ENCODE measurements at regions of chr9 and their contacts with region 1.

Region 1: DNA sequence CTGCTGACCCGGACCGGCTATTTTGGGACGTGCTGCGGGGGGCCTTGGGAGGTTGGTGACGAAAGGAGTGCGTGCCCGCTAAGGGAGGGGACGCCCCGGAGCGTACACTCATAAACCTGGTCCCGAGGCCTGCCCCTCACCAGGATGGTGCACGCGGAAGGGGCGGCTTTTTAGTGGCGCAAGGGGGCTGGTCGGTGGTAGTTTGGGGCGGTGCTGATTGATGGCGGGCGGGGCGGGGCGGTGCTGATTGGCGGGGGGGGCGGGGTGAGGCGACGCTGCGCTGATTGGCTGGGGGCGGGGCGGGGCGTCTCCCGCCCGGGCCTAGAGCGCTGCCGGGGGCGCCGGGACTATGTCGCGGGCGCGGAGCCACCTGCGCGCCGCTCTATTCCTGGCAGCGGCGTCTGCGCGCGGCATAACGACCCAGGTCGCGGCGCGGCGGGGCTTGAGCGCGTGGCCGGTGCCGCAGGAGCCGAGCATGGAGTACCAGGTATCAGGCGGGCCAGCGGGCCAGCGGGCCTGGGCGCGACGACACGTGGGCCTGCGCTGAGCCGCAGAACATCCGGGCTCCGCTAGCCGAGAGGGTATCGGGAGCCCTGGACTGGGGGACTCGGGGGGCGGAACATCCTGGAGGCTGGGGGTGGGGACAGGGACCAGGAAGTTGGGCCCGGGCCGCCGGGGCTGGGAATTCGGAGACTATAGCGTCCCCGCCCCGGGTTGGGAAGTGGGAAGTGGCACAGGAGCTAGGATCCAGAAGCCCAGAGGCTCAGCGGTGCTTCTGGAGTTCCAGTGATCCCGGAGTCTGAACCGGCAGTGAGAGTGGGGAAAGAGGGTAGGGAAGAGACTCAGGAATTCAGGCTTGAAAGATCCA is at the start of gene FPGS:
- DNase-seq: peak; percentile 66 to 90
- H3K4me3 ChIP-seq: peak within 1 kb of the TSS; percentile 86
- H3K27ac ChIP-seq: peak within 1 kb of the TSS; percentile 96
- H3K4me1 ChIP-seq: peaks cover 48% of the 10 kb centered on the region
- H3K27me3 ChIP-seq: no peaks in the 10 kb centered on the region
- CTCF ChIP-seq: no peak
- total RNA-seq, gene FPGS: 152 and 191 TPM in 2 replicates

Region 2: GRCh38 chr9:126791406-126792151 is 1011.2 kb before region 1 on chr9:
- CTCF ChIA-PET with region 1: no interaction called
- POLR2A ChIA-PET with region 1: no interaction called
- intact Hi-C with region 1: no loop called
- DNase-seq: peak; percentile 69 to 99
- H3K4me3 ChIP-seq: no peak overlapping the region
- H3K27ac ChIP-seq: peak overlapping the region; percentile 77
- H3K4me1 ChIP-seq: peaks cover 49% of the 10 kb centered on the region
- H3K27me3 ChIP-seq: no peaks in the 10 kb centered on the region
- CTCF ChIP-seq: no peak

Region 3: GRCh38 chr9:126914458-126915280 is 888.1 kb before region 1 on chr9 and contains the start of gene RALGPS1:
- CTCF ChIA-PET with region 1: no interaction called
- POLR2A ChIA-PET with region 1: interaction called, 11 read pairs
- intact Hi-C with region 1: no loop called
- DNase-seq: peak; percentile 90 to 98
- H3K4me3 ChIP-seq: peak within 1 kb of the TSS; percentile 61
- H3K27ac ChIP-seq: no peak within 1 kb of the TSS
- H3K4me1 ChIP-seq: peaks cover 6% of the 10 kb centered on the region; the same call in 1 of the 2 replicates
- H3K27me3 ChIP-seq: no peaks in the 10 kb centered on the region
- CTCF ChIP-seq: no peak
- total RNA-seq, gene RALGPS1: 23.3 and 25.8 TPM in 2 replicates

Region 4: GRCh38 chr9:127785023-127785932 is 17.5 kb before region 1 on chr9:
- CTCF ChIA-PET with region 1: interaction called, 6 read pairs
- POLR2A ChIA-PET with region 1: interaction called, 23 read pairs
- intact Hi-C with region 1: loop called (anchors 1 kb)
- DNase-seq: peak; percentile 47 to 91
- H3K4me3 ChIP-seq: peak overlapping the region; percentile 99
- H3K27ac ChIP-seq: no peak overlapping the region
- H3K4me1 ChIP-seq: peaks cover 8% of the 10 kb centered on the region
- H3K27me3 ChIP-seq: no peaks in the 10 kb centered on the region
- CTCF ChIP-seq: peak; percentile 94

Region 5: GRCh38 chr9:127854184-127854806 is 51.5 kb after region 1 on chr9 and contains the start of gene ENG:
- CTCF ChIA-PET with region 1: interaction called, 6 read pairs
- POLR2A ChIA-PET with region 1: interaction called, 21 read pairs
- intact Hi-C with region 1: loop called (anchors 1 kb)
- DNase-seq: peak; percentile 43 to 78
- H3K4me3 ChIP-seq: peak within 1 kb of the TSS; percentile 54
- H3K27ac ChIP-seq: no peak within 1 kb of the TSS
- H3K4me1 ChIP-seq: peaks cover 16% of the 10 kb centered on the region
- H3K27me3 ChIP-seq: no peaks in the 10 kb centered on the region
- CTCF ChIP-seq: no peak
- total RNA-seq, gene ENG: 18.4 and 23.1 TPM in 2 replicates

Region 6: GRCh38 chr9:127924743-127925444 is 122.1 kb after region 1 on chr9:
- CTCF ChIA-PET with region 1: no interaction called
- POLR2A ChIA-PET with region 1: interaction called, 10 read pairs
- intact Hi-C with region 1: no loop called
- DNase-seq: no peak
- H3K4me3 ChIP-seq: no peak overlapping the region
- H3K27ac ChIP-seq: no peak overlapping the region
- H3K4me1 ChIP-seq: peaks cover 32% of the 10 kb centered on the region
- H3K27me3 ChIP-seq: no peaks in the 10 kb centered on the region
- CTCF ChIP-seq: no peak

Region 7: GRCh38 chr9:128396970-128397613 is 594.3 kb after region 1 on chr9:
- CTCF ChIA-PET with region 1: no interaction called
- POLR2A ChIA-PET with region 1: no interaction called
- intact Hi-C with region 1: no loop called
- DNase-seq: no peak
- H3K4me3 ChIP-seq: no peak overlapping the region
- H3K27ac ChIP-seq: no peak overlapping the region
- H3K4me1 ChIP-seq: no peaks in the 10 kb centered on the region
- H3K27me3 ChIP-seq: no peaks in the 10 kb centered on the region
- CTCF ChIP-seq: no peak

Measured in PC-9 (cell line).